ENCODE measurements at regions of chr1 and their contacts with region 1.

Region 1: DNA sequence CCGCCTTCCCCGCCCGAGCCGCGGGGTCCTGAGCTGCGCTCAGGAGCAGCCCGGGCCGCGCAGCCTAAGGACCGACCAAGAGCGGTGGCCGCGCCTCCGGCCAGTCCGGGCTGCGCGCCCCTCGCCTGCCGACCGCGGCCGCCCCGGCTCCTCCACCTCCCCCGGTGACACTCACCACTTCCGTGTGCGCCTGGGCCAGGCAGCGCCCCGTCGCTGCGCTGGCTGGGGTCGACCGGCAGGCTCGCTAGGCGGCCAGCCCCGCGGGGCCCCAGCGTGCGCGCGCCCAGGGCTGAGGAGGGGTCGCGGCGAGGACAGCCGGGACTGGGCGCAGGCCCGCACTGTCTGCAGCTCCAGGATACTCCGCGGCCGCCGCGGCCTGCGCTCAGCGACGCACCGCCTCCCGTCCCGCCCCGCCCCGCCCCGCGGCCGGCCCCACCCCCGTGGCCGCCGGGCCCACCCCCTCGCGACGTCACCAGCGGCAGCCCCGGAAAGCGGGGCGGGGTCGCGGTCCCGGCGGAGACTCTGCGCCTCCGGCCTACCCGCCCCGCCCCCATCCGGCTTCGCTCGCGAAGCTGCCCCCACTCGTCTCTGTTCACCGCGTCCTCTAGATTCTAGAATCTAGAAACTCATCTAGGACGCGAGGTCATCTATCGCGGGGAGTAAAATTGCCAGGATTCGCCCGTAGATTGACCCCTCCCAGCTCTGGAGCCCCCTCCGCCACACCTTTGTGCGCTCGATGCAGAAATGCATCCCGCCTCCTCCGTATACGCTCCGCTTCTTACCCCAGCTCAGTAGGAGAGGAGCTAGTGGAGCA is at the start of gene JAK1:
- DNase-seq: peak; percentile 88
- ATAC-seq: peak; percentile 84
- H3K4me3 Mint-ChIP-seq: peak within 1 kb of the TSS; percentile 86
- H3K27ac Mint-ChIP-seq: peak within 1 kb of the TSS; percentile 94
- H3K4me1 Mint-ChIP-seq: peaks cover 44% of the 10 kb centered on the region
- H3K27me3 Mint-ChIP-seq: no peaks in the 10 kb centered on the region
- CTCF ChIP-seq: no peak
- total RNA-seq, gene JAK1: 96.3 to 108 TPM

Region 2: DNA sequence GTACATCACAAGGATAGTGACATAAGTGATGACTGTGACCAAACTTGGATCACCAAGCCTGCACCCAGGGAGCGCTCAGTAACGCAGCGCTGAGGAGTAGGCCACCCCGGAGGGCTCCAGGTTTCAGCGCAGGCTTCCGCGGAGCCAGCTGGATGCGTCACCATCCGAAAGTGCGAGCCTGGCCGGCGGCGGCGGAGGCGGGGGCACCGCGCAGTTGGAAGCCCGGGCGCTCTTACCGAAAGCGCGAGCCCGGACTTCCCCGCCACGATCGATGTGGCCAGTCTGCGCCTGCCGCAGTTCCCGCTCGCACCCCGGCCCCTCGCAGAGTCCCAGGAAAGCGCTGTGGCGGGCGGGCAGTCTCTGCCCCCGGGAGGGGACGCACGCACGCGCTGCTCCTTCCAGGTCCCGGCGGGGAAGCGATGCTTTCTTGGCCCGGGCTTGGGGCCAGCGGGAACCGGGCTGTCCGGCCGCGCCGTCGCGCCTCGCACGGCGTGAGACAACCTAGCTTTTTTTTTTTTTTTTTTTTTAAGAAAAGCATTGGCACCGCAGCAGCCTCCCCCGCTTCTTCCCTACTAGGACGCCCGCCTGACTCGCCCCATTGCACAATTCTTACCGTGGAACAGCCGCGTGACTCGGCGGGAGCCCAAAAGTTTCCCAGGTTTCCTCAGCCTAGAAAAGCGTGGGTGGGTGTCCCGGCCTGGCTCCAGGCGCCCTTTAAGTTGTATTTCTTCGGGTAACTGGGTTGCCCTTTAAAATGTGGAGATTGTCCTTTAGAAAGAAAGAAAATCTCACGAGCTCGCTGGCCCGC is 36.3 kb after region 1 on chr1:
- CTCF ChIA-PET with region 1: no interaction called
- POLR2A ChIA-PET with region 1: interaction called, 5 read pairs
- intact Hi-C with region 1: loop called (anchors 5 kb)
- DNase-seq: peak; percentile 85
- ATAC-seq: peak; percentile 87
- H3K4me3 Mint-ChIP-seq: peak overlapping the region; percentile 57
- H3K27ac Mint-ChIP-seq: peak overlapping the region; percentile 67
- H3K4me1 Mint-ChIP-seq: peaks cover 27% of the 10 kb centered on the region
- H3K27me3 Mint-ChIP-seq: peaks cover 1% of the 10 kb centered on the region
- CTCF ChIP-seq: no peak

Region 3: DNA sequence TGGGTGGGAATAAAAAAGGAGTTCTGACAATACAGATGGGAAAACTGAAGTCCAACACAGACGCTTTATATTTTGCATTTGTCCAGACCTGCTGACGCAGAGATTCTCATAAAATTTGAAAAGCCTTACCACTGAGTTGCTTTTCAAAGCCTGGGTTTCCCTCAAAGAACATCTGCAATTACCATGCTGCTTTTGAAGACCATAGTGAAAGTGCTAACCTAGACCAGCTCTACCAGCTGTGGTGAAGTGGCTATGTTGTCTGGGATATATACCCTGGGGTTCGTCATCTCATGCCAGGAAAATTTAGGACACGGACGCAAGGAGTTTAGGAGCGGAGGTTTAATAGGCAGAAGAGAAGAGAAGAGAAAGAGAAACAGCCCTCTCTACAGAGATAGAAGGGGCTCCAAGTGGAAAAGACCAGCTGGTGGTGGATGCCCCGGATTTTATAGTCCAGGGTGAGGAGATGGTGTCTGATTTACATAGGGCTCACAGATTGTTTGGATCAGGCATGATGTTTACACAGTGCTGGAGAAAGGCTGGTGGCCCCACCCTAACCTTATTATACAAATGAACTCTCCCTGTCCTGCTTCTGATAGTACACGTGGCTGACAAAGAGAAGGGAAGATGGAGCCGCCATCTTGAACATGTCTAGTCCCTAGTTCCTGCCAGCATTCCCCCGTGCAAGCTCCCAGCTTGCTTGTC is 255.4 kb after region 1 on chr1:
- CTCF ChIA-PET with region 1: no interaction called
- POLR2A ChIA-PET with region 1: no interaction called
- intact Hi-C with region 1: no loop called
- DNase-seq: no peak
- ATAC-seq: no peak
- H3K4me3 Mint-ChIP-seq: no peak overlapping the region
- H3K27ac Mint-ChIP-seq: no peak overlapping the region
- H3K4me1 Mint-ChIP-seq: peaks cover 4% of the 10 kb centered on the region
- H3K27me3 Mint-ChIP-seq: peaks cover 6% of the 10 kb centered on the region
- CTCF ChIP-seq: no peak

Measured in activated CD8-positive, alpha-beta T cell treated with anti-CD3 and anti-CD28 coated beads for 36 hours (primary cell).